B cell (primary cell): ENCODE measurements at regions of chr1 and their contacts with region 1.

Region 1: DNA sequence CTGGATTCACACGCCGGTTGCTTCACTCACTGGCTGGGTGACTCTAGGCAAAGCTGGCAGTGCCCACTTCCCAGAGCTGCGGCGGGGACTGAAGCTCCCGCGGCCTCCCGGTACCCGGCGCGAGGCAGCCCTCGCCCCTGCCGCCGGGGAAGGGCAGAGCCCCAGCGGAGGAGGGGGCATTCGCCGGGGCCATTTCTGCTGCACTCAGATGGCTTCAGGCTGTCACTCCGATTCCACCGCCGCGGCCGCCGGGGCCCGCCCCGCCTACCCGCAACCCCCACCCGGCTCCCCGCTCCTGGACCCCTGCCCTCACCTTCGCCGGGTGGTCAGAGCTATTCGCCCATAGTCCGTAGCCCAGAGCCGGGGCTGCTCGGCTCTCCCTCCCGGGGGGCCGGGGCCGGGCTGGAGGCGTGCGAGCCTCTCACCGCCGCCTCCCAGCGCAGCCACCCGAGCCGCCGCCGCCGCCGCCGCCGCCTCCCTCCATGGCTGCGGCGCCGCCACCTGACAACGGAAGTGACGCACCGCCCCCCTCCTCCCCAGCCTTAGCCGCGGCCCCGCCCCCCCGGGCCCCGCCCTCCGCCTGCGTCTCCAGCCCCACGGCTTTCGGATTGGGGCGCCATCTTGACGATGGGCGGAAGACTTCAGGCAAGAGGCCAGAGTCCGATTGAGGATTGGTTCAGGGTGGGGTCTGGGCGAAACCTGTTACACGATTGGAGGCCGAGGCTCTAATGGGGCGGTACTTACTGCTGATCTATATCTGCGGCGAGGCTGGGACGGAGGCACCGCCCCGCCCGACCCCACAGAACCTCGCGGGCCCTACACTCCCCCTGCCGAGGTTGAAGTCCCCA is at the start of gene STK40:
- DNase-seq: peak; percentile 98
- ATAC-seq: peak; percentile 84
- H3K4me3 ChIP-seq: peak within 1 kb of the TSS; percentile 74 to 97 (median 93)
- H3K4me3 Mint-ChIP-seq: peak within 1 kb of the TSS; percentile 97
- H3K27ac ChIP-seq: peak within 1 kb of the TSS; percentile 92 to 93
- H3K27ac Mint-ChIP-seq: peak within 1 kb of the TSS; percentile 100
- H3K4me1 ChIP-seq: peaks cover 64 to 80% of the 10 kb centered on the region in 2 donors
- H3K4me1 Mint-ChIP-seq: peaks cover 79% of the 10 kb centered on the region
- H3K27me3 ChIP-seq: no peaks in the 10 kb centered on the region
- H3K27me3 Mint-ChIP-seq: no peaks in the 10 kb centered on the region
- CTCF ChIP-seq: no peak
- total RNA-seq, gene STK40: 69.1 and 72.8 TPM in 2 replicates

Region 2: GRCh38 chr1:36223993-36224536 is 161.6 kb before region 1 on chr1 and contains the start of gene THRAP3:
- CTCF ChIA-PET with region 1: no interaction called
- POLR2A ChIA-PET with region 1: interaction called, 7 read pairs
- intact Hi-C with region 1: loop called (anchors 1 kb)
- DNase-seq: peak; percentile 100
- ATAC-seq: peak; percentile 88
- H3K4me3 ChIP-seq: peak within 1 kb of the TSS; percentile 77 to 98 (median 91)
- H3K4me3 Mint-ChIP-seq: peak within 1 kb of the TSS; percentile 98
- H3K27ac ChIP-seq: peak within 1 kb of the TSS; percentile 95 to 100
- H3K27ac Mint-ChIP-seq: peak within 1 kb of the TSS; percentile 100
- H3K4me1 ChIP-seq: peaks cover 22 to 43% of the 10 kb centered on the region in 2 donors
- H3K4me1 Mint-ChIP-seq: peaks cover 34% of the 10 kb centered on the region
- H3K27me3 ChIP-seq: no peaks in the 10 kb centered on the region
- H3K27me3 Mint-ChIP-seq: no peaks in the 10 kb centered on the region
- CTCF ChIP-seq: no peak
- total RNA-seq, gene THRAP3: 153 and 159 TPM in 2 replicates

Region 3: GRCh38 chr1:36300526-36300925 is 85.1 kb before region 1 on chr1:
- CTCF ChIA-PET with region 1: no interaction called
- POLR2A ChIA-PET with region 1: no interaction called
- intact Hi-C with region 1: no loop called
- DNase-seq: no peak
- ATAC-seq: no peak
- H3K4me3 ChIP-seq: no peak overlapping the region
- H3K4me3 Mint-ChIP-seq: no peak overlapping the region
- H3K27ac ChIP-seq: no peak overlapping the region
- H3K27ac Mint-ChIP-seq: peak overlapping the region; percentile 8
- H3K4me1 ChIP-seq: peaks cover 0 to 15% of the 10 kb centered on the region in 2 donors
- H3K4me1 Mint-ChIP-seq: peaks cover 23% of the 10 kb centered on the region
- H3K27me3 ChIP-seq: no peaks in the 10 kb centered on the region
- H3K27me3 Mint-ChIP-seq: no peaks in the 10 kb centered on the region
- CTCF ChIP-seq: no peak

Region 4: DNA sequence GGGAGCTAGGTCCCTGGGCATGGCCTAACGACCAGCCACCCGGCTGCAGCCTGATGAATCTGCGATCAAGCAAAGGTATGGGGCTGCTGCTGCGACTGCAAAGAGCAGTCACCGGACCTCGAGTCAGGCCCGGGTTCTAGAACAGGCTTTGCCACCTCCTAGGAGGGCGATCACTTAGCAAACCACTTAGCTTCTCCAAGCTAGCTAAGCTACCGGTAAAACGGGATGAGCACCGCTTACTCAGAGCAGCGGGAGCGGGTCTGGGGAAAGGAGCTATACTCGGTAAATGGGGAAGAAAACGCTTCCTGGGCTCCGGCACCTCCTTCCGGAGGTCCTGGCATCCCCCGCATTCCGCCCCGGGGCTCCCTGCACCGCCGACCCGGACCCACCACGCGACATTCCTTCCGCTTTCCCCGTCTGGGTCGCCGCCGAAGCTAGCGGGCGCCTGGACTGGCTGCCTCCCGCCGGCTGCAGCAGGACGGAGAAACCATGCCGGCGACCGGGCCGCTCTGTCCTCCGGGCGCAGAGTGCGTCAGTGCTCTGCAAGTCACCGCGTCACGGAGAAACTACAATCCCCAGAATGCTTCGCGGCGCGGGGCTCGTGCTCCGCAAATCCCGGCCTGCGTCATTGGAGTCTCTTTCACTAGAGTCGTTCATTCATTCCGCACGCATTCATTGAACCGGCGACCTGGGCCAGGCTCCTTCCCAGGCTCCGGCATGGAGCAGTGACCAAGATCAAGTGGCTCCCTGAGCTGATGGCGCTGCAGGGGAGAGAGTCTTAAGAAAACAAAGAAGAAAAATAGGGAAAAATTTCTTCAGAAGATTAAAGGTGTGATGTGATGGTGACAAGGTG is 12.0 kb after region 1 on chr1 and contains the start of gene LSM10:
- CTCF ChIA-PET with region 1: interaction called, 18 read pairs
- POLR2A ChIA-PET with region 1: interaction called, 34 read pairs
- intact Hi-C with region 1: loop called (anchors 1 kb)
- DNase-seq: peak; percentile 93
- ATAC-seq: peak; percentile 88
- H3K4me3 ChIP-seq: peak within 1 kb of the TSS; percentile 76 to 99 (median 97)
- H3K4me3 Mint-ChIP-seq: peak within 1 kb of the TSS; percentile 92
- H3K27ac ChIP-seq: peak within 1 kb of the TSS; percentile 78 to 93
- H3K27ac Mint-ChIP-seq: peak within 1 kb of the TSS; percentile 94
- H3K4me1 ChIP-seq: peaks cover 20 to 47% of the 10 kb centered on the region in 2 donors
- H3K4me1 Mint-ChIP-seq: peaks cover 55% of the 10 kb centered on the region
- H3K27me3 ChIP-seq: no peaks in the 10 kb centered on the region
- H3K27me3 Mint-ChIP-seq: no peaks in the 10 kb centered on the region
- CTCF ChIP-seq: no peak
- total RNA-seq, gene LSM10: 70.6 and 73.5 TPM in 2 replicates

Region 5: DNA sequence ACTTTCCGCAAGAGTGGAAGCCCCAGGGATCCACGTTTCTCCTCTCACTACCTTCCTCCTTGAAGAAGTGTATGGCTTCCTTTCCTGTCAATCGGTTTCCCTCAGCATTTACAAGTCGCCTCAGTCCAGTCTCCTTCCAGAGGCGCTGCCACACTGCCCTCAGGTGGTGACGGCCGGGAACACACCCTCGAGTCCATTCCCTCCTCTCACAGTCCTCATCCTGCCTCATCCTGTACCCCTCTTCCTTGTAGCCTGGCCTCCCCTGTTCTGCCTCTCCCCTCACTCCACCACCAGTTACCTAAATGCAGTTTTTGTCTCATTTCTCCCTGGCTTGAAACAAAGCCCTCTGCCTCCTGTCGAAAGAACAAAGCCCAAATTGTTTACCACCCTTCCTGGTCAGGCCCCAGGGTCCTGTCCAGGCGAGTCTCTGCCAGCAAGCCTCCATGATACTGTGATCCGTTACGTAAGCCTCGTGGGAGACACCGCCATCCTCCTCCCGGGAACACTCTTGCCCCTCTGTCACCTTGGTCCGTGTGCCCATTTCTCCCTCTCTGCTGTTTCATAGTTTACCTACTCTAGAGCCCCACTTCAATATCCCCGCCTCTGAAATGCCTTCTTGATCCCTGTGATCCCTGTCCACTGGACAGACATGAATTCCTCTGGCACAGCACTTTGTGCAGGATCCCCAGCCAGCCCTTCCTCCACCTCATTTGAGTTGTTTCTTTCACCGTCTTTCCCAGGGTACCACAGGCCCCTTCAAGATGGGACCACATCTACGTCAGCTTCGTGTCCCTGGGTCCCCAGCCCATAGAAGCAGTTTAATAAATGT is 35.4 kb after region 1 on chr1:
- CTCF ChIA-PET with region 1: interaction called, 7 read pairs
- POLR2A ChIA-PET with region 1: interaction called, 3 read pairs
- intact Hi-C with region 1: loop called (anchors 1 kb)
- DNase-seq: peak; percentile 88
- ATAC-seq: peak; percentile 100
- H3K4me3 ChIP-seq: no peak overlapping the region
- H3K4me3 Mint-ChIP-seq: no peak overlapping the region
- H3K27ac ChIP-seq: no peak overlapping the region
- H3K27ac Mint-ChIP-seq: peak overlapping the region; percentile 37
- H3K4me1 ChIP-seq: peaks cover 4 to 5% of the 10 kb centered on the region in 2 donors
- H3K4me1 Mint-ChIP-seq: peaks cover 8% of the 10 kb centered on the region
- H3K27me3 ChIP-seq: no peaks in the 10 kb centered on the region
- H3K27me3 Mint-ChIP-seq: no peaks in the 10 kb centered on the region
- CTCF ChIP-seq: peak; percentile 97

Region 6: GRCh38 chr1:37479255-37480124 is 1093.9 kb after region 1 on chr1:
- CTCF ChIA-PET with region 1: no interaction called
- POLR2A ChIA-PET with region 1: interaction called, 3 read pairs
- intact Hi-C with region 1: loop called (anchors 5 kb)
- DNase-seq: peak; percentile 79
- ATAC-seq: peak; percentile 50
- H3K4me3 ChIP-seq: peak overlapping the region; percentile 94 to 99 (median 98)
- H3K4me3 Mint-ChIP-seq: peak overlapping the region; percentile 100
- H3K27ac ChIP-seq: peak overlapping the region; percentile 96 to 97
- H3K27ac Mint-ChIP-seq: peak overlapping the region; percentile 98
- H3K4me1 ChIP-seq: peaks cover 32 to 66% of the 10 kb centered on the region in 2 donors
- H3K4me1 Mint-ChIP-seq: peaks cover 60% of the 10 kb centered on the region
- H3K27me3 ChIP-seq: no peaks in the 10 kb centered on the region
- H3K27me3 Mint-ChIP-seq: no peaks in the 10 kb centered on the region
- CTCF ChIP-seq: no peak